HEK293 (cell line): ENCODE measurements at regions of chr14 and their contacts with region 1.

Region 1: GRCh38 chr14:95534299-95535225 is at the start of gene GLRX5:
- H3K4me3 ChIP-seq: peak within 1 kb of the TSS; percentile 97
- H3K27ac ChIP-seq: peak within 1 kb of the TSS; percentile 71
- H3K4me1 ChIP-seq: peaks cover 35% of the 10 kb centered on the region
- CTCF ChIP-seq: no peak

Region 2: GRCh38 chr14:95515596-95516552 is 18.7 kb before region 1 on chr14:
- CTCF ChIA-PET with region 1: interaction called, 3 read pairs
- POLR2A ChIA-PET with region 1: interaction called, 13 read pairs
- H3K4me3 ChIP-seq: peak overlapping the region; percentile 42
- H3K27ac ChIP-seq: peak overlapping the region; percentile 41; the same call in 1 of the 2 replicates
- H3K4me1 ChIP-seq: peaks cover 11% of the 10 kb centered on the region
- CTCF ChIP-seq: peak; percentile 85

Region 3: GRCh38 chr14:95635060-95635459 is 100.5 kb after region 1 on chr14:
- CTCF ChIA-PET with region 1: no interaction called
- POLR2A ChIA-PET with region 1: no interaction called
- H3K4me3 ChIP-seq: no peak overlapping the region
- H3K27ac ChIP-seq: no peak overlapping the region
- H3K4me1 ChIP-seq: no peaks in the 10 kb centered on the region
- CTCF ChIP-seq: no peak